Heart left ventricle (tissue), 16 donors: ENCODE measurements at regions of chr18 and their contacts with region 1.

Region 1: DNA sequence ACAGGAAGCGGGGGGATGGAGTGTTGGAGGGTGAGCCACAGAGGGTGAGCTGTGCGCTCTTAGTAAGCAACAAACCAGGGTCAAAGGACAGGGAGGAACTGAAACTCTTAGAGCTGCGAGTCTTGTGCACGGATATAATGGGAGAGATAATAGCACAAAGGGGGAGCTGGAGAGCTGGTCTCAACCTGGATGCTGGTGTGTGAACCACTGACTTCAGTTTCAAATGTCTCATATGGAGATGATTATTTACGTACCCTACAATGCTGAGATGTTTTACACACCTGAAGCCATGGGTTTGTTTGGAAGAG is 35.9 kb downstream of the PTGR3 start:
- DNase-seq: no peak
- ATAC-seq: no peak
- H3K4me3 ChIP-seq: no peak overlapping the region
- H3K27ac ChIP-seq: no peak overlapping the region
- H3K4me1 ChIP-seq: peaks cover 0 to 21% (median 7%) of the 10 kb centered on the region in 12 donors
- H3K27me3 ChIP-seq: no peaks in the 10 kb centered on the region
- CTCF ChIP-seq: peak in 6 of 12 donors; percentile 10 to 30 (median 22)
- POLR2A ChIP-seq: no peak

Region 2: GRCh38 chr18:75204269-75204731 is 31.2 kb after region 1 on chr18:
- intact Hi-C with region 1: loop called in 5 of 10 experiments (anchors 2 to 5 kb)
- DNase-seq: peak in 3 of 5 donors; percentile 32 to 54 (median 34)
- ATAC-seq: peak; percentile 0 to 43 (median 40)
- H3K4me3 ChIP-seq: peak overlapping the region; percentile 42 to 99 (median 56)
- H3K27ac ChIP-seq: peak overlapping the region; percentile 26 to 99 (median 67)
- H3K4me1 ChIP-seq: peaks cover 0 to 65% (median 50%) of the 10 kb centered on the region in 12 donors
- H3K27me3 ChIP-seq: no peaks in the 10 kb centered on the region
- CTCF ChIP-seq: no peak
- POLR2A ChIP-seq: no peak